Endothelial cell of umbilical vein (primary cell): ENCODE measurements at regions of chr2 and their contacts with region 1.

Region 1: DNA sequence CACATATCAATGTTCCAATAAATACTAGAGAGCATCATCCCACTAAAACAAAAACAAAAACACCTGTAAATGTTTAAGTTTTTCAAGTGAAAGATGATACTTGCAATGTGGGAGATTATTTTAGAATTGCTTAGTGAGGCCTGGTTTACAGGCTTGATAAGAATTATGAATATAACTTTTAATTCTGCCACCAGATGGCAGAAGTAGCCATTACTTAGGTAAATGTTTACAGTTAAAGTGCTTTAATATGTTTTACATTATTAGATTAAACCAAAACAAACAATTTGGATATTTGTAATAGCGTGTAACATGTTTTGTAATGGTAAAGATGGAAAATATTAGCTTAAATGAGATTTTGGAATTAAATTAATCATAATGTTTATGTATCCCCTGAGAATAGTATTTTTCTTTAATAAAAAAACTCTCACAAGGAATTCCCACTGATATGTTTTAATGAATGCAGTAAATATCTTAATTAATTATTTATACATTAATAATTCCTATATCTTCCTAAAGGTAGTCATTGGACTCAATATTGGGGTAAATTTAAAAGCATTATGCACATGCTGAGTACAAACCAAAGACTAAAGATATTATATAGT is 522.0 kb downstream of the SPAG16 start:
- DNase-seq: peak; percentile 30
- H3K4me3 ChIP-seq: no peak overlapping the region
- H3K27ac ChIP-seq: no peak overlapping the region
- H3K4me1 ChIP-seq: no peaks in the 10 kb centered on the region
- H3K27me3 ChIP-seq: no peaks in the 10 kb centered on the region
- CTCF ChIP-seq: no peak
- POLR2A ChIP-seq: no peak

Region 2: DNA sequence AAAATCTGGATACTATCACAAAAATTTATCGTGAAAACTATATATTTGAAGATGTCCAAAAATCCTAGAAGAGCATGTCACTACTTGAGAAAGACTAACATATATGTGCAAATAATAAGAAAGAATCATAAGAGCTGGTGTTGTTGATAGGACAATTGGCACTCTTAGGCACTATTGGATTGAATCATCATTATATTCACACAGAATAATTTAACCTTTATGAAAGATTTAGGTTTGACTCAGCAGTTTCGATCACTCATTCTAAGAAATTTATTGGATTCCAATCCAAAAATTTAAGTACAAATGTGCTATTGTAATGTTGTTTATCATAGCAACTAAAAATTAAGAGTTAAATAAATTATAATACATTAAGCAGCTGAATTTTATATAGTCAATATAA is 18.4 kb before region 1 on chr2:
- CTCF ChIA-PET with region 1: no interaction called
- POLR2A ChIA-PET with region 1: no interaction called
- dilution Hi-C with region 1: no loop called
- intact Hi-C with region 1: no loop called
- DNase-seq: no peak
- H3K4me3 ChIP-seq: no peak overlapping the region
- H3K27ac ChIP-seq: no peak overlapping the region
- H3K4me1 ChIP-seq: no peaks in the 10 kb centered on the region
- H3K27me3 ChIP-seq: no peaks in the 10 kb centered on the region
- CTCF ChIP-seq: no peak
- POLR2A ChIP-seq: no peak

Region 3: GRCh38 chr2:214830794-214831346 is 1024.6 kb after region 1 on chr2:
- CTCF ChIA-PET with region 1: interaction called, 4 read pairs
- POLR2A ChIA-PET with region 1: no interaction called
- dilution Hi-C with region 1: no loop called
- intact Hi-C with region 1: loop called (anchors 2 kb)
- DNase-seq: peak; percentile 40
- H3K4me3 ChIP-seq: no peak overlapping the region
- H3K27ac ChIP-seq: no peak overlapping the region
- H3K4me1 ChIP-seq: no peaks in the 10 kb centered on the region
- H3K27me3 ChIP-seq: peaks cover 0 to 6% of the 10 kb centered on the region in 2 experiments
- CTCF ChIP-seq: peak in 1 of 2 donors; percentile 35
- POLR2A ChIP-seq: no peak

Region 4: DNA sequence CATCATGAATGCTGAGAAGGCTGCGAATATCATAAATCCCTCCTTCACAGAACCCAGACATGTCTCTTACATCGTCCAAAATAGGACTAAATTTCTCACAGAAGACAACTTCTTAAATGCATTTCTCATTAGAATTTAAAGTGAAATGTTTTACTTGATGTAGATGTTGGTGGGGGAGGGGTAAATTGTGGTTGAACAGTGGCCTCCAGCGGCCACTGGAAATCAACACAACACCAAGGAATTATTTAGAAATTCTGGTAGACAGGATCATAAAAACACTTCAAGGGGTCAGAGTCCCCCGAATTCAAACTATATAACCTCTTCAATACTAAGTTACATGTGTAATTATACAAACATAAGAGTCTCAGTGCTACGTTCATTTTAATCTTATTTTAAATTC is 1196.3 kb after region 1 on chr2:
- CTCF ChIA-PET with region 1: no interaction called
- POLR2A ChIA-PET with region 1: no interaction called
- dilution Hi-C with region 1: no loop called
- intact Hi-C with region 1: loop called (anchors 1 kb)
- DNase-seq: peak; percentile 33
- H3K4me3 ChIP-seq: no peak overlapping the region
- H3K27ac ChIP-seq: no peak overlapping the region
- H3K4me1 ChIP-seq: no peaks in the 10 kb centered on the region
- H3K27me3 ChIP-seq: peaks cover 0 to 2% of the 10 kb centered on the region in 2 experiments
- CTCF ChIP-seq: peak; percentile 34 to 40
- POLR2A ChIP-seq: no peak

Region 5: DNA sequence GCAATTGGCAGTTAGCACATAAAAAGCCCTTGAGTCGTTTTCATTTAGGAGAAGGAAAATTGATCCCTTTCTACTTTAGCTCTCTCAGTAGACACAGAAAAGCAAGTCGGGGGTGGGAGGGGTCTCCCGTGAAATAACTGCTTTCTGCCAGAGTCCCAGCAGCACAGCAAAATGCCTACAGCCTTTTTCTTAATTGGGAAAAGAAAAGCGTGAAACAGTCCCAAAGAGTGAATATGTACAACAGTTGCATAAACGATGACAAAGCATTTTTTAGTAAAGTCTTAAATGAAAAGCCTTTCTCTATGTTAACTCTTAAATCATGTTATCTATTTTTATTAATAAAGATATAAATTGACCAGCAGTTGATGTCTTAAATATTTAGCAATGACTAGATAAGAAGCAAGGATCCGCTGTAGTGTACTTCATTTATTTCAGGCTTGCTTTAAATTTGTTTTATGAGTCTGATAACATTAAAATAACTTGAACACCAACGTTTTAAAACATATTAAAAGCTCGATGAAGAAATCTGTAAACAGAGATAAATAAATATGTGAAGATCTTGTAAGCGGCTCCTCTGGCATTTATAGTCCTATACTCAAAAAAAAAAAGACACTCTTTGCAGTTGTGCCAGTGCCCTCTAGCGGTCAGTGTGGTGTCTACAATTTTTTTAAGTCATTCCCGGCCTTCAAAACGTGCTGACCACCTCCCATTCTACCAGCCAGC is 1463.3 kb after region 1 on chr2:
- CTCF ChIA-PET with region 1: no interaction called
- POLR2A ChIA-PET with region 1: no interaction called
- dilution Hi-C with region 1: no loop called
- intact Hi-C with region 1: loop called (anchors 5 kb)
- DNase-seq: peak; percentile 77
- H3K4me3 ChIP-seq: no peak overlapping the region
- H3K27ac ChIP-seq: no peak overlapping the region
- H3K4me1 ChIP-seq: no peaks in the 10 kb centered on the region
- H3K27me3 ChIP-seq: no peaks in the 10 kb centered on the region
- CTCF ChIP-seq: peak; percentile 73 to 75
- POLR2A ChIP-seq: no peak